Common myeloid progenitor, CD34-positive (primary cell): ENCODE measurements at regions of chr3 and their contacts with region 1.

Region 1: GRCh38 chr3:106609666-106610301 is 741.0 kb upstream of the CBLB start:
- DNase-seq: peak; percentile 55 to 83 (median 75)
- H3K4me3 ChIP-seq: no peak overlapping the region
- H3K27ac ChIP-seq: no peak overlapping the region
- H3K4me1 ChIP-seq: no peaks in the 10 kb centered on the region
- H3K27me3 ChIP-seq: no peaks in the 10 kb centered on the region

Region 2: GRCh38 chr3:105686278-105686897 is 923.4 kb before region 1 on chr3:
- CTCF ChIA-PET with region 1: interaction called, 17 read pairs
- POLR2A ChIA-PET with region 1: no interaction called
- DNase-seq: peak; percentile 24 to 61 (median 55)
- H3K4me3 ChIP-seq: no peak overlapping the region
- H3K27ac ChIP-seq: no peak overlapping the region
- H3K4me1 ChIP-seq: no peaks in the 10 kb centered on the region
- H3K27me3 ChIP-seq: no peaks in the 10 kb centered on the region

Region 3: GRCh38 chr3:106534206-106534605 is 75.6 kb before region 1 on chr3:
- CTCF ChIA-PET with region 1: no interaction called
- POLR2A ChIA-PET with region 1: no interaction called
- DNase-seq: peak; percentile 16 to 81 (median 69)
- H3K4me3 ChIP-seq: no peak overlapping the region
- H3K27ac ChIP-seq: no peak overlapping the region
- H3K4me1 ChIP-seq: no peaks in the 10 kb centered on the region
- H3K27me3 ChIP-seq: no peaks in the 10 kb centered on the region

Region 4: DNA sequence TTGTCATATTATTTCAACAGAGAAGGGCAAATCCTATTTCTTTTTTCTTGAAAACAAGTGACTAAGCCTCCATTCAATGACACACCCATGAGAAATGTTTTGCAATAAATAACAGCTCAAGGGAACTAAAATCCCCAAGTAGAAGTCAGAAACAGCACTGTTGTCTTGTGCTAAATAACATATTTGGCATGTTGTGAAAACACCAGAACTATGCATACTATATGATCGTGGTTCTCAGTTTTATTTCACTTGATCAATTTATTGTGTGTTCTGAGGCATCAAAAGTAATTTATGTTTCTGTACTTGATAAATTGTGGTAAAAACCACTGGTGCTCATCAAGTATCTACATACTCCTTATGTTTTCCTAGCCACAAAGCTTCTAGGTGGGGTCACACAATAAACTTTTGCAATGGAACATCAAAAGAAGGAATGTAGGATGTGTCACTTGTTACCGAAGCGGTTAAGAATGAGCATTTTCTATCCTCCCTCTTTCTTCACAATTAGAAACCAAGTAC is 49.3 kb before region 1 on chr3:
- CTCF ChIA-PET with region 1: no interaction called
- POLR2A ChIA-PET with region 1: no interaction called
- DNase-seq: no peak
- H3K4me3 ChIP-seq: no peak overlapping the region
- H3K27ac ChIP-seq: no peak overlapping the region
- H3K4me1 ChIP-seq: no peaks in the 10 kb centered on the region
- H3K27me3 ChIP-seq: no peaks in the 10 kb centered on the region

Region 5: GRCh38 chr3:106635271-106635670 is 25.5 kb after region 1 on chr3:
- CTCF ChIA-PET with region 1: no interaction called
- POLR2A ChIA-PET with region 1: no interaction called
- DNase-seq: no peak
- H3K4me3 ChIP-seq: no peak overlapping the region
- H3K27ac ChIP-seq: no peak overlapping the region
- H3K4me1 ChIP-seq: no peaks in the 10 kb centered on the region
- H3K27me3 ChIP-seq: no peaks in the 10 kb centered on the region